K562 (cell line): ENCODE measurements at regions of chr7 and their contacts with region 1.

Region 1: DNA sequence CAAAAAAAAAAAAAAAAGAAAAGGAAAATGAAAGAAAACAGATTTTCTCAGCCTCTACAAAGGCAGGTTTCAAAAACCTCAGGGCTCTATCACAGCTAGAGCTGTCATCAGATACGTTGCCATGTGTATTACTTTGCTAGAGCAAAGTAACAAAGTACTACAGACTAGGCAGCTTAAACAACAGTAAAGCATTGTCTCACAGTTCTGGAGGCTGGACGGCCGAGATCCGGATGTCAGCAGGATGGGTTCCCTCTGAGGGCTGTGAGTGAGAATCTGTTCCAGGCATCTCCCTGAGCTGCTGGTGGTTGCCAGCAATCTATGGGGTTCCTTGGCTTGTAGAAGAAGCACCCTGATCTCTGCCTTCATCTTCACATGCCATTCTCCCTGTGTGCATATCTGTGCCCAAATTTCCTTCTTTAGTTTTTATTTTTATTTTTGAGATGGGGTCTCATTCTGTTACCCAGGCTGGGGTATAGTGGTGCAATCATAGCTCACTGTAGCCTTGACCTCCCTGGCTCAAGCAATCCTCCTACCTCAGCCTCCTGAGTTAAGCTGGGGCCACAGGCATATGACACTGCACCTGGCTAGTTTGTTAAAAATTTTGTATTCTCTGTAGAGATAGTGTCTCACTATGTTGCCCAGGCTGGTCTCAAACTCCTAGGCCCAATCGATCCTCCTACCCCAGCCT is 48.9 kb upstream of the KDM7A start:
- DNase-seq: no peak
- ATAC-seq: no peak
- H3K4me3 ChIP-seq: no peak overlapping the region
- H3K27ac ChIP-seq: no peak overlapping the region
- H3K4me1 ChIP-seq: peaks cover 17 to 27% of the 10 kb centered on the region in 2 experiments; a peak in 4 of 5 replicates
- H3K27me3 ChIP-seq: no peaks in the 10 kb centered on the region
- CTCF ChIP-seq: no peak
- EP300 ChIP-seq: no peak
- POLR2A ChIP-seq: no peak
- RAD21 ChIP-seq: no peak

Region 2: GRCh38 chr7:140041659-140042385 is 183.9 kb before region 1 on chr7:
- CTCF ChIA-PET with region 1: no interaction called
- POLR2A ChIA-PET with region 1: no interaction called
- in situ Hi-C with region 1: no loop called
- intact Hi-C with region 1: no loop called
- DNase-seq: no peak
- ATAC-seq: no peak
- H3K4me3 ChIP-seq: no peak overlapping the region
- H3K27ac ChIP-seq: no peak overlapping the region
- H3K4me1 ChIP-seq: no peaks in the 10 kb centered on the region
- H3K27me3 ChIP-seq: no peaks in the 10 kb centered on the region
- CTCF ChIP-seq: no peak
- EP300 ChIP-seq: no peak
- POLR2A ChIP-seq: no peak
- RAD21 ChIP-seq: no peak

Region 3: DNA sequence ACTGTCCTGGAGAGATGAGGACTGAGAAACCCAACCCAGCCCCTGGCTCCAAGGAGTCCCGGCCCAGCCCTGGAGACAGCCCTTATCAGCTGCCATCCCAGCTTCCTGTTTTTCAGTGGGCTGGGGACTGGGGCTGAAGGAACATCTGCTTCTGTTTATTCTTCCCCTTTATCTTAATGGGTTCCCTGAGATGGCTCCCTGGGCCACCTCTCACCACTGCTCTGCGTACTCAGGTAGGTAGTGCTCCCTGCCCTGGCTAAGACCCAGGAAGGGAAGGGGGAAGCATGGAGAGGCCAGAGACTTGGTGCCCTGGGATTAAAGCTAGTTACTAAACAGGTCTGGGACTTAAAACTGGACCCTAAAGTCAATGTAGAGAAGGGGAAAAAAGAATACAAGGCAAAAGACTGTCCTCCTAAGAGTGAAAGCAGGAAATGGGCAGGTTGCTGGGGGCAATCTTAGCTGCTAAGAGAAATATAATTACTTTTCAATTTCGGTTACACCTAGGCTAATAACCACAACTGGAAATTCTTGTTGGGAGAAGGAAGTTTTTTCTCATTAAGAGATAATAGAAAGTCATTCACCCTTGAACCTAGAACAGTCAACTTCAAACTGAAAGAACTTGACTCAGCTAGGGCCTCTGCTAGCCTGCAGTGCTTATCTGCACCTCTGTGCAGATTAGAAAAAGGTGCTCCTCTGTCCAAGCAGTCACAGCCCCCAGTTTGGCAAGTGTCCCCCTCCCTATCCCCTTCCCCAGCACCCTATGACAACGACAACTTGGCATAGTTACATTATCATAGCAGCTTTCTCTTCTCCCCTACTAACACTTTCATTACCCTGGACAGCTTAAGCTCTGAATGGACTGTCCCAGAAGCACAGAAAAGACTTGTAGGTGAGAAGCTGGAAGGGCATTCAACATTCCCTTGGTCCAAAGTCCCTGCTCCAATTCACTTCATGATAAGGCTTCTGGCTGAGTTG is 16.6 kb after region 1 on chr7:
- CTCF ChIA-PET with region 1: interaction called, 6 read pairs
- POLR2A ChIA-PET with region 1: interaction called, 15 read pairs
- in situ Hi-C with region 1: no loop called
- intact Hi-C with region 1: no loop called
- DNase-seq: peak; percentile 82 to 96 (median 91)
- ATAC-seq: peak; percentile 91
- H3K4me3 ChIP-seq: peak overlapping the region; percentile 11
- H3K27ac ChIP-seq: peak overlapping the region; percentile 78
- H3K4me1 ChIP-seq: peaks cover 36 to 46% of the 10 kb centered on the region in 2 experiments
- H3K27me3 ChIP-seq: no peaks in the 10 kb centered on the region
- CTCF ChIP-seq: no peak
- EP300 ChIP-seq: peak; percentile 96
- POLR2A ChIP-seq: no peak
- RAD21 ChIP-seq: peak; percentile 20 to 21; a peak in 1 of 4 replicates